ENCODE measurements at regions of chr16 and their contacts with region 1.

Region 1: DNA sequence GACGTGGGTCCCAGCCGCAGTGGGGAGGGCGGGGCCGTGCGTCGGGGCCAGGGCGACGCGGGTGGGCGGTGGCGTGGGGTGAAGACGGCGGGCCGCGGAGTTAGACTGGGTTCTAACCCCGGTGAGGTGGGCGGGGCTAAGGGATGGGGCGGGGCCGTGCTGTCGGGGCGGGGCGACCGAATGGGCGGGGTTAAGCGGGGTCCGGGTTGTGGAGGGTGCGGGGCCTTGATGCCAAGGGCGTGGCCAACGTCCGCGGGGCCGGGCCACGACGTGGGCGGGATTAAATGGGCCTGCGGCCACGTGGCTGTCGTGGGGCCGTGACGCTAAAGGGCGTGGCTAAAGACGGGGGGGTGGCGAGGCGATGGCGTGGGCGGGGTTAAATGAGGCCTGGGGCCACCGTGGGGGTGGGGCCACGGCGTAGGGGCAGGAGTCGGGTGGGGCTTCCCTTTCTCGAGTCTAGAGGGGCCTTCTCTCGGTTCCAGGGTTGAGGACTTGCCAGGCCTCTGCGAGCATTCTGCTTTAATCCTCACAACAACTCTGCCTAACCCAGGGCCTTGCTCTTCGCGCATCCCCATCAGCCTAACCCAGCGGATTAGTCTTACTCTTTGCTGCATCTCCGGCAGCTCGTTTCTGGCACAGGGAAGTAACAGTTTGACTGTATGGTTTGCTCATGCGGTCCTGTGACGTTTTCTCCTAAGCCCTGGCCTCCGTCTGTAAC is 739 bp downstream of the TCF25 start:
- DNase-seq: peak; percentile 89
- ATAC-seq: peak; percentile 61
- H3K4me3 ChIP-seq: peak overlapping the region; percentile 84 to 99 (median 98)
- H3K27ac ChIP-seq: peak overlapping the region; percentile 100
- H3K4me1 ChIP-seq: peaks cover 34% of the 10 kb centered on the region
- H3K27me3 ChIP-seq: no peaks in the 10 kb centered on the region
- CTCF ChIP-seq: no peak
- EP300 ChIP-seq: peak in 1 of 2 experiments; percentile 38; a peak in 1 of 4 replicates
- POLR2A ChIP-seq: peak in 1 of 2 experiments; percentile 65
- RAD21 ChIP-seq: no peak

Region 2: DNA sequence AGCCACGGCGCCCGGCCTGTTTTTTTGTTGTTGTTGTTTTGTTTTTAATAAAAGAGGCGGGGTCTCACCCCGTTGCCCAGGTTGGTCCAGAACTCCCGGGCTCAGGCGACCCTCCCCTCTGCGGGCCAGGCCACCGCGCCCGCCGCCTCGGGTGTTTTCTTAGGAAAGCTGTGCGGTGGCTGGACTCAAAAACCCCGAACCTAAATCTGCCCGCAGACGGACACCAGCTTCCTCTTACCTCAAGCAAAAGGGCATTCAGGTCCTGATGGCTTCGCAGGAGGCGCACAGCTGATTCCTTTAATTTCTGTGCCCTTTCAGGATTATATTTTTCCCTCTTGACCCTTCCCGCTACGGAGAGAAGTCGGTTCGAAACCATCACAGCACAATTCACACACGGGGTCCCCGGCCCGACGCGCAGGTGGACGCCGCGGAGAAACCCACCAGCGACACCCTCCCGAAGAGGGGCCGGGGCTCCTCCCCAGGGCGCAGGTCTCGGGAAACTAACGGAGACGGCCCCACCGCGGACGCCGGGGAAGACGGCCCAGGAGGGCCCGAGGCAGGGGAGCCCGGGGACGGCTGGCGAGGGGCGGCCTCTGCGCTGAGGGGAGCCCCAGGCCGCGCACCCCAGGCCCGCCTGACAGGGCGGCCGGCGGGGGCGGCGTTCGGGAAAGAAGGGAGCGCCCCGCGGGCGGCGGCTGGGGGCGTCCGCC is 58.3 kb before region 1 on chr16:
- CTCF ChIA-PET with region 1: no interaction called
- POLR2A ChIA-PET with region 1: interaction called, 23 read pairs
- in situ Hi-C with region 1: no loop called
- intact Hi-C with region 1: loop called (anchors 5 kb)
- DNase-seq: no peak
- ATAC-seq: no peak; the same call in 2 of the 3 replicates
- H3K4me3 ChIP-seq: peak overlapping the region; percentile 71 to 91 (median 87)
- H3K27ac ChIP-seq: peak overlapping the region; percentile 96
- H3K4me1 ChIP-seq: peaks cover 57% of the 10 kb centered on the region
- H3K27me3 ChIP-seq: no peaks in the 10 kb centered on the region; a peak in 1 of 5 replicates
- CTCF ChIP-seq: no peak
- EP300 ChIP-seq: no peak
- POLR2A ChIP-seq: no peak
- RAD21 ChIP-seq: no peak

Region 3: DNA sequence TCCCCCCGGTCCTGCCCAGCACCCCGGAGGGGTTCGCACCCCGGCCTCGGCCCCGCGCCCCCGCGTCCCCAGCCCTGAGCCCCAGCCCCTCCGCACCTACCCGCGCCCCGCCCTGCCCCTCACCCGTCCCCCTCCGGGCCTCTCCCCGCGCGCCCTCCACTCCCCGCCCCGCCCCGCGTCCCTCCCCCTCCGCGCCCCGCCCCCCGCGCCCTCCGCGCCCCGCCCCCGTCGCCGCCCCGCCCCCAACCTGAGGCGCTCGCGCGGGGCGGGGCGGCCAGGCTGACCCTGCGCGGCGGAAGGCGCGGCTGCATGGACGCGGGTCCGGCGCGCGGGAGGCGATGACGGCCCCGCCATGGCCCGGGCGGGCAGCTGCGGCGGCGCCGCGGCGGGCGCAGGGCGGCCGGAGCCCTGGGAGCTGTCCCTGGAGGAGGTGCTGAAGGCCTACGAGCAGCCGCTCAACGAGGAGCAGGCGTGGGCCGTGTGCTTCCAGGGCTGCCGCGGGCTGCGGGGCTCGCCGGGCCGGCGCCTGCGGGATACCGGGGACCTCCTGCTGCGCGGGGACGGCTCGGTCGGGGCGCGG is 45.8 kb before region 1 on chr16 and contains the start of gene SPIRE2:
- CTCF ChIA-PET with region 1: no interaction called
- POLR2A ChIA-PET with region 1: interaction called, 11 read pairs
- in situ Hi-C with region 1: no loop called
- intact Hi-C with region 1: no loop called
- DNase-seq: no peak
- ATAC-seq: peak; percentile 55
- H3K4me3 ChIP-seq: peak within 1 kb of the TSS; percentile 82 to 97 (median 94)
- H3K27ac ChIP-seq: peak within 1 kb of the TSS; percentile 94
- H3K4me1 ChIP-seq: peaks cover 69% of the 10 kb centered on the region
- H3K27me3 ChIP-seq: no peaks in the 10 kb centered on the region; a peak in 1 of 5 replicates
- CTCF ChIP-seq: no peak
- EP300 ChIP-seq: no peak
- POLR2A ChIP-seq: peak; percentile 29 to 65; a peak in 3 of 4 replicates
- RAD21 ChIP-seq: peak; percentile 79
- total RNA-seq, gene SPIRE2: 7.6 and 13.3 TPM in 2 replicates

Region 4: GRCh38 chr16:89842471-89843408 is 31.4 kb before region 1 on chr16:
- CTCF ChIA-PET with region 1: no interaction called
- POLR2A ChIA-PET with region 1: interaction called, 48 read pairs
- in situ Hi-C with region 1: no loop called
- intact Hi-C with region 1: loop called (anchors 5 kb)
- DNase-seq: peak; percentile 87
- ATAC-seq: peak; percentile 60
- H3K4me3 ChIP-seq: peak overlapping the region; percentile 14 to 42 (median 16); a peak in 5 of 6 replicates
- H3K27ac ChIP-seq: peak overlapping the region; percentile 47
- H3K4me1 ChIP-seq: peaks cover 43% of the 10 kb centered on the region
- H3K27me3 ChIP-seq: no peaks in the 10 kb centered on the region
- CTCF ChIP-seq: no peak; the same call in 1 of the 2 replicates
- EP300 ChIP-seq: no peak
- POLR2A ChIP-seq: no peak; a peak in 1 of 4 replicates
- RAD21 ChIP-seq: no peak

Region 5: GRCh38 chr16:89909777-89910716 is 35.9 kb after region 1 on chr16:
- CTCF ChIA-PET with region 1: no interaction called
- POLR2A ChIA-PET with region 1: interaction called, 22 read pairs
- in situ Hi-C with region 1: no loop called
- intact Hi-C with region 1: no loop called
- DNase-seq: peak; percentile 60
- ATAC-seq: peak; percentile 82
- H3K4me3 ChIP-seq: no peak overlapping the region
- H3K27ac ChIP-seq: no peak overlapping the region
- H3K4me1 ChIP-seq: peaks cover 17% of the 10 kb centered on the region
- H3K27me3 ChIP-seq: no peaks in the 10 kb centered on the region
- CTCF ChIP-seq: peak; percentile 95
- EP300 ChIP-seq: no peak
- POLR2A ChIP-seq: no peak
- RAD21 ChIP-seq: peak; percentile 54

Region 6: DNA sequence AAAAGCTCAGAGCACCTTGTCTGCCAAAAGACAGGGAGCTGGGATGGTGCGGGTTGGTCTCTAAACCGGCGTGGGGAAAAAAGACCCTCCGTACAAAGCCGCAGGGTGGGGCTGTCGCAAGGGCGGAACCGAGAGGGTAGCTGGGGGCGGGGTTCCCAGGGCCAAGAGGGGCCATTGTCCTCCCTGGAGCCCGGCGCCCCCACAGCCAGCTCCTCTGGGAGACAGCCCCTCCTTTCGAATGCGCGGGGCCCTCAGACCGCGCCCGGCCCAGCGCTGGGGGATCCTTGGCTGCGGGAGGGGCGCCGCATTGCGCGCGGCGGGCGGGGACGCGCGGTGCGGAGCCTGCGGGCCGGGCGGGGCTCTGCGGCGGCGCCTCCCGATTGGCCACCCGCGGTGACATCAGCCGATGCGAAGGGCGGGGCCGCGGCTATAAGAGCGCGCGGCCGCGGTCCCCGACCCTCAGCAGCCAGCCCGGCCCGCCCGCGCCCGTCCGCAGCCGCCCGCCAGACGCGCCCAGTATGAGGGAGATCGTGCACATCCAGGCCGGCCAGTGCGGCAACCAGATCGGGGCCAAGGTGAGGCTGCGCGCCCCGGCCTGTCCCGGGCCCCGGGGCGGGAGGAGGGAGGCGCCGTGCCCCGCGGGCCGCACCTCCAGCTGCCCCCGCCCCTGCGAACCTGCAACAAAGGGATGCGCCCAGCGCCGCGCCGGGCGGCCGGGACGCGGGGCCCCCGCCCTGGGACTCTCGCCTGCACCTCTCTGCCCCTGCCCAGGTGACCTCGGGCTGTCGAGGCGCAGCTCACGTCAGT is 49.0 kb after region 1 on chr16 and contains the start of gene TUBB3:
- CTCF ChIA-PET with region 1: no interaction called
- POLR2A ChIA-PET with region 1: interaction called, 77 read pairs
- in situ Hi-C with region 1: no loop called
- intact Hi-C with region 1: loop called (anchors 2 kb)
- DNase-seq: peak; percentile 73
- ATAC-seq: peak; percentile 18
- H3K4me3 ChIP-seq: peak within 1 kb of the TSS; percentile 74 to 90 (median 81)
- H3K27ac ChIP-seq: peak within 1 kb of the TSS; percentile 88
- H3K4me1 ChIP-seq: peaks cover 52% of the 10 kb centered on the region
- H3K27me3 ChIP-seq: no peaks in the 10 kb centered on the region; a peak in 1 of 5 replicates
- CTCF ChIP-seq: peak; percentile 37
- EP300 ChIP-seq: peak in 1 of 2 experiments; percentile 29; a peak in 1 of 4 replicates
- POLR2A ChIP-seq: peak in 1 of 2 experiments; percentile 90; a peak in 2 of 4 replicates
- RAD21 ChIP-seq: peak; percentile 64
- total RNA-seq, gene TUBB3: 161 and 185 TPM in 2 replicates

Region 7: DNA sequence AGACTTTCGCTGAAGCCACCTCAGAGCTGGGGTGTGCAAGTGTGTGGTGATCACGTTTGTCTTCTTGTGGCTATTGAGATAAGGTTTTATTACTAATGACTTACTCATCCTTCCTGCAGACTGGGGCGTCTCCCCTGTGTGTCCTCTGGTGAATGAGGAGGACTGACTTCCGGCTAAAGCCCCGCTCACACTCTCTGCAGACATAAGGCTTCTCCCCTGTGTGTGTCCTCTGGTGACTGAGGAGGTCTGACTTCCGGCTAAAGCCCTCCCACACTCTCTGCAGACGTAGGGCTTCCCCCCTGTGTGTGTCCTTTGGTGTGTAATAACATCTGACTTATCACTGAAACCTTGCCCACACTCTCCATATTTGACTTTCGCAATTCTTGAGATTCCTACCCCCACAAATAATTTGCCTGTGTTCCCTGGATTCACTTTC is 183.6 kb after region 1 on chr16:
- CTCF ChIA-PET with region 1: no interaction called
- POLR2A ChIA-PET with region 1: no interaction called
- in situ Hi-C with region 1: no loop called
- intact Hi-C with region 1: no loop called
- DNase-seq: peak; percentile 71
- ATAC-seq: peak; percentile 71
- H3K4me3 ChIP-seq: no peak overlapping the region
- H3K27ac ChIP-seq: no peak overlapping the region
- H3K4me1 ChIP-seq: peaks cover 45% of the 10 kb centered on the region
- H3K27me3 ChIP-seq: 0 out of 5 replicates have a peak, but pooled peaks cover 0 to 5% of the 10 kb centered on the region in 2 experiments
- CTCF ChIP-seq: no peak
- EP300 ChIP-seq: no peak
- POLR2A ChIP-seq: no peak
- RAD21 ChIP-seq: no peak